Naive thymus-derived CD4-positive, alpha-beta T cell (primary cell): ENCODE measurements at regions of chr12 and their contacts with region 1.

Region 1: DNA sequence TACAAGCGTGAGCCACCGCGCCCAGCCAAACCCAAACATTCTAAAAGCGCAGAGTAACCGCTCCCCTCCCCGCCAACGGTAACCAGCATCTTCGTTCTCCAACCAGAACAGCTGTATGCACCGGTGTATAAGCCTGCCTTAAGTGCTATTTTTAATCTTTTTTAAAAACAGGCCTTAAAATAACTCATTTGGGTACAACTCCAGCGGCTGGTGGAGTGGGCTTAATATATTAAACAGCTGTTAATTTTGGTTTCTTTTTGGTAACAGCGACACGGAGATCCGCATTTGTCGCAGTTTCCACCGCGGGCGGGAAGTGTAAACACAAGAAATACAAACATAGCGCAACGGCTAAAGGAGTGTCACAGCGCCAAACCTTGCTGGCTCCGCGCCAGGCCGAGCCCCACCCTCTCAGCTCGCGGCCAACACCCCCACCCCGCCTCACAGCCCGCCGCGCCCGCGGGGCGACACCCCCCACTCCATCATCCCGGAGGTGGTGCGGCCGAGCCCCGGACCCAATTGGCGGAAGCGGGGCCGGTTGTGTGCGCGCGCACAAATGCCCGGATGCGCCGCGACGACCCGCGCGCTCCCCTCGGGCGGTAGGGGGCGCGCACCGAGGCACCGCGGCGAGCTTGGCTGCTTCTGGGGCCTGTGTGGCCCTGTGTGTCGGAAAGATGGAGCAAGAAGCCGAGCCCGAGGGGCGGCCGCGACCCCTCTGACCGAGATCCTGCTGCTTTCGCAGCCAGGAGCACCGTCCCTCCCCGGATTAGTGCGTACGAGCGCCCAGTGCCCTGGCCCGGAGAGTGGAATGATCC is at the start of gene MDM2:
- DNase-seq: peak; percentile 94 to 98 (median 96)
- ATAC-seq: peak; percentile 97
- H3K4me3 ChIP-seq: peak within 1 kb of the TSS; percentile 79
- H3K4me3 Mint-ChIP-seq: peak within 1 kb of the TSS; percentile 87 to 100 (median 96)
- H3K27ac ChIP-seq: peak within 1 kb of the TSS; percentile 96
- H3K27ac Mint-ChIP-seq: peak within 1 kb of the TSS; percentile 96 to 100 (median 97)
- H3K4me1 ChIP-seq: peaks cover 3 to 13% of the 10 kb centered on the region in 2 donors
- H3K4me1 Mint-ChIP-seq: peaks cover 6 to 47% (median 29%) of the 10 kb centered on the region in 7 donors
- H3K27me3 ChIP-seq: no peaks in the 10 kb centered on the region
- H3K27me3 Mint-ChIP-seq: no peaks in the 10 kb centered on the region
- total RNA-seq, gene MDM2: 77.8 to 271 (median 80.8) TPM

Region 2: GRCh38 chr12:68040450-68041075 is 767.2 kb before region 1 on chr12:
- CTCF ChIA-PET with region 1: no interaction called
- POLR2A ChIA-PET with region 1: no interaction called
- intact Hi-C with region 1: loop called in 1 of 2 experiments (anchors 2 kb)
- DNase-seq: peak; percentile 19 to 72 (median 61)
- ATAC-seq: peak; percentile 84
- H3K4me3 ChIP-seq: no peak overlapping the region
- H3K4me3 Mint-ChIP-seq: peak overlapping the region in 2 of 10 donors; percentile 13 to 33
- H3K27ac ChIP-seq: no peak overlapping the region
- H3K27ac Mint-ChIP-seq: no peak overlapping the region
- H3K4me1 ChIP-seq: peaks cover 0 to 5% of the 10 kb centered on the region in 2 donors
- H3K4me1 Mint-ChIP-seq: peaks cover 0 to 24% (median 5%) of the 10 kb centered on the region in 7 donors
- H3K27me3 ChIP-seq: no peaks in the 10 kb centered on the region
- H3K27me3 Mint-ChIP-seq: no peaks in the 10 kb centered on the region

Region 3: DNA sequence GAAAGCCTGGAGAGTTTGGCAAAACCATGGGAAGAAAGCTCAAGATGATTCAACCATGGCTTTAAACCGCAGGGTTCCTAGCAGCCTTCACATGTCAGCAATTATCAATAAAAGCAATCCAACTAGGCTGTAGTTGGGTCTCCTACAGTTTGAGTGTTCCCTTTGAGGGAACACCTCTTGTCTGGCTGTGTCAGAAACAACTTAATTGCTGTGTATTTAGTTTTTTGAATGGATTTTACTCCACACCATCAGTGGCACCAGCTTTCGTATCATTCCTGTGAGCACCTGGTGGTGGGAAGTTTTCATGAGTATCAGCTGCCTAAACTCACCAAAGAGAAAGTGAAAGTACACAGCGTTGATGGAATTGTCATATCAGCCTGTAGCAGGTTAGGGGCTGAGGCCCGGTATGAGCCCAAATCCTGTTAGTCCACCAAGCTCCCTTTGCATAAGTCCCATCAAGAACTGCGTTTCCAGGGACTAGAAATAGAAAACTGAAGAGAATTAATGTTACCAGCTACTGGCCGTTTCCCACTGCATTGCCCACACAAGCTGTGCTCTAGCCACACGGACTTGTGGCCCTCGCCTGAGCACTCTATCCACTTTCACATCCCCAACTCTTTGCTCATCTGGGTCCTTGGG is 571.2 kb before region 1 on chr12:
- CTCF ChIA-PET with region 1: no interaction called
- POLR2A ChIA-PET with region 1: no interaction called
- intact Hi-C with region 1: loop called in 1 of 2 experiments (anchors 5 kb)
- DNase-seq: peak in 7 of 9 donors; percentile 58 to 78 (median 68)
- ATAC-seq: peak; percentile 84
- H3K4me3 ChIP-seq: peak overlapping the region; percentile 64
- H3K4me3 Mint-ChIP-seq: peak overlapping the region; percentile 82 to 97 (median 94)
- H3K27ac ChIP-seq: peak overlapping the region; percentile 67
- H3K27ac Mint-ChIP-seq: peak overlapping the region; percentile 88 to 99 (median 96)
- H3K4me1 ChIP-seq: peaks cover 23 to 32% of the 10 kb centered on the region in 2 donors
- H3K4me1 Mint-ChIP-seq: peaks cover 35 to 72% (median 60%) of the 10 kb centered on the region in 7 donors
- H3K27me3 ChIP-seq: no peaks in the 10 kb centered on the region
- H3K27me3 Mint-ChIP-seq: no peaks in the 10 kb centered on the region

Region 4: GRCh38 chr12:68364893-68365725 is 442.7 kb before region 1 on chr12:
- CTCF ChIA-PET with region 1: no interaction called
- POLR2A ChIA-PET with region 1: no interaction called
- intact Hi-C with region 1: loop called (anchors 2 to 5 kb)
- DNase-seq: peak; percentile 52 to 85 (median 77)
- ATAC-seq: peak; percentile 86
- H3K4me3 ChIP-seq: peak overlapping the region; percentile 57
- H3K4me3 Mint-ChIP-seq: peak overlapping the region; percentile 77 to 93 (median 87)
- H3K27ac ChIP-seq: peak overlapping the region; percentile 80
- H3K27ac Mint-ChIP-seq: peak overlapping the region; percentile 86 to 97 (median 93)
- H3K4me1 ChIP-seq: peaks cover 40 to 50% of the 10 kb centered on the region in 2 donors
- H3K4me1 Mint-ChIP-seq: peaks cover 56 to 84% (median 69%) of the 10 kb centered on the region in 7 donors
- H3K27me3 ChIP-seq: no peaks in the 10 kb centered on the region
- H3K27me3 Mint-ChIP-seq: no peaks in the 10 kb centered on the region

Region 5: GRCh38 chr12:68587448-68587873 is 220.3 kb before region 1 on chr12:
- CTCF ChIA-PET with region 1: no interaction called
- POLR2A ChIA-PET with region 1: no interaction called
- intact Hi-C with region 1: loop called in 1 of 2 experiments (anchors 1 kb)
- DNase-seq: peak in 8 of 9 donors; percentile 39 to 66 (median 53)
- ATAC-seq: peak; percentile 72
- H3K4me3 ChIP-seq: no peak overlapping the region
- H3K4me3 Mint-ChIP-seq: peak overlapping the region; percentile 10 to 70 (median 64)
- H3K27ac ChIP-seq: no peak overlapping the region
- H3K27ac Mint-ChIP-seq: peak overlapping the region; percentile 78 to 96 (median 88)
- H3K4me1 ChIP-seq: peaks cover 26 to 37% of the 10 kb centered on the region in 2 donors
- H3K4me1 Mint-ChIP-seq: peaks cover 33 to 82% (median 60%) of the 10 kb centered on the region in 7 donors
- H3K27me3 ChIP-seq: no peaks in the 10 kb centered on the region
- H3K27me3 Mint-ChIP-seq: no peaks in the 10 kb centered on the region

Region 6: GRCh38 chr12:68772714-68773113 is 35.1 kb before region 1 on chr12:
- CTCF ChIA-PET with region 1: interaction called, 3 read pairs
- POLR2A ChIA-PET with region 1: interaction called, 7 read pairs
- intact Hi-C with region 1: loop called in 1 of 2 experiments (anchors 5 kb)
- DNase-seq: peak in 2 of 9 donors; percentile 7 to 13
- ATAC-seq: no peak
- H3K4me3 ChIP-seq: peak overlapping the region; percentile 16
- H3K4me3 Mint-ChIP-seq: peak overlapping the region; percentile 36 to 81 (median 70)
- H3K27ac ChIP-seq: peak overlapping the region; percentile 39
- H3K27ac Mint-ChIP-seq: peak overlapping the region; percentile 24 to 94 (median 86)
- H3K4me1 ChIP-seq: peaks cover 5 to 15% of the 10 kb centered on the region in 2 donors
- H3K4me1 Mint-ChIP-seq: peaks cover 9 to 36% (median 23%) of the 10 kb centered on the region in 7 donors
- H3K27me3 ChIP-seq: no peaks in the 10 kb centered on the region
- H3K27me3 Mint-ChIP-seq: no peaks in the 10 kb centered on the region

Region 7: GRCh38 chr12:69239352-69239921 is 431.7 kb after region 1 on chr12 and contains the start of gene CPSF6:
- CTCF ChIA-PET with region 1: no interaction called
- POLR2A ChIA-PET with region 1: no interaction called
- intact Hi-C with region 1: loop called (anchors 1 to 2 kb)
- DNase-seq: peak; percentile 93 to 97 (median 95)
- ATAC-seq: peak; percentile 96
- H3K4me3 ChIP-seq: peak within 1 kb of the TSS; percentile 86
- H3K4me3 Mint-ChIP-seq: peak within 1 kb of the TSS; percentile 94 to 100 (median 98)
- H3K27ac ChIP-seq: peak within 1 kb of the TSS; percentile 90
- H3K27ac Mint-ChIP-seq: peak within 1 kb of the TSS; percentile 96 to 100 (median 99)
- H3K4me1 ChIP-seq: peaks cover 32 to 37% of the 10 kb centered on the region in 2 donors
- H3K4me1 Mint-ChIP-seq: peaks cover 32 to 58% (median 54%) of the 10 kb centered on the region in 7 donors
- H3K27me3 ChIP-seq: no peaks in the 10 kb centered on the region
- H3K27me3 Mint-ChIP-seq: no peaks in the 10 kb centered on the region
- total RNA-seq, gene CPSF6: 86.8 to 127 (median 96.5) TPM